Psoas muscle (tissue), 8 donors: ENCODE measurements at regions of chr1 and their contacts with region 1.

Region 1: DNA sequence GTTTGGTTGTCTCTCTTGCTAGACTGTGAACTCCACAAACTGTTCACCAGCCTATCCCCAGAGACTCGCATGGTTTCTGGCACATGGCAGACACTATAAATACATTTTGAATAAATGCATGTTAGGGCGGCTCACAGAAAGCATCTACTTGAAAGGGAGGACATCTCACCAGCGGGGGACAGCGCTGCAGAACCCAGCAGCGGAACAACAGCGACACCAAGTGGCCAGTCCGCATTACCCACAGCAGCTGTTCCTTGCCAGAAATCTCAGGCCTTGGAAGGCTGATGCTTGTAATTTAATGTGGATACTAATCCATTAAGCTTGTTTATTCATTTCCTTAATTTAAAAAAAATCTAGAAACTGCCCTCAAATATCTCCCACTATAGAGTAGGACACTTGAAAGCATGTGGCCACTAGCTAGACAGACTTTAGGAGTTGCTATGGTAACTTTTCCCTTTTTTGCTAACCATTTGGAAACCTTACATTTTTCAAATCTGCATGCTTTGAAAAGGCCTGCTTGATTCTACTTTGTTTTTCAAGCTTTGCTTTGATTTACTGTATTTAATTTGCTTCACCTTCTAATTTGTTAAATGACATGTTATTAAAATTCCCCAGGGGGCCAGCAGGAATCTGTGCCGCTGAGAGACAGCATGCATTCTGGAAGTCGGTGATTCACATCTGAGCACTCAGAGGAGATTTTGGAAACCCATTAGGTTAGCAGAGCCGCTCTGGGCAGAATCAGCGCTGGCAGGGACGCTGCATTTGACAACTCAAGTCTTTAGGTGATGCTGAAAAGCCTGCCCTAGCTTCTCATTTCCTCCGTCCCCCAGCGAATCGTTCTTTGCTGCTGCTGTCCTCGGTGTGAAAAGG is 63.5 kb upstream of the SSX2IP start:
- DNase-seq: peak; percentile 58 to 72
- ATAC-seq: peak; percentile 81 to 95 (median 88)
- H3K4me3 ChIP-seq: no peak overlapping the region
- H3K27ac ChIP-seq: no peak overlapping the region
- H3K4me1 ChIP-seq: no peaks in the 10 kb centered on the region
- H3K27me3 ChIP-seq: peaks cover 0 to 3% (median 0%) of the 10 kb centered on the region in 3 donors
- CTCF ChIP-seq: peak; percentile 96

Region 2: DNA sequence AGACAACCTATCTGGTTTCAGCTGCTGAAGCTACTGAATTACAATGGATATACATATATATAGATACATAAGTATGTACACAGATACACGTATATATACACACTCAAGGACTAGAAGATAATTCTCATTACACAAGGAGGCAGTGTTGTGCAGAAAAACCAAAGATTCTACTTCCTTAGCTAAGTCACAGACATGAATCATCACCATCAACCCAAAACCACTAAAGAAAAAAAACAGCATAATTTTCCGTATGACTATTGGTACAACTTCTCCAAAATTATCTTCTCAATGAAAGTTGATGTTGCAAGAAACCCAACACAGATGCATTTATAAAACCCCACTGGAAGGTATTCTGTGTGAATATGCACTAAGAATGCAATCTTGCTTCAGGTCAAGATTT is 311.5 kb before region 1 on chr1:
- intact Hi-C with region 1: loop called (anchors 5 to 10 kb)
- DNase-seq: no peak
- ATAC-seq: peak in 3 of 4 donors; percentile 55 to 71 (median 61)
- H3K4me3 ChIP-seq: no peak overlapping the region
- H3K27ac ChIP-seq: no peak overlapping the region
- H3K4me1 ChIP-seq: no peaks in the 10 kb centered on the region
- H3K27me3 ChIP-seq: no peaks in the 10 kb centered on the region
- CTCF ChIP-seq: peak; percentile 46

Region 3: GRCh38 chr1:84668185-84668584 is 85.6 kb before region 1 on chr1:
- intact Hi-C with region 1: loop called (anchors 5 to 10 kb)
- DNase-seq: no peak
- ATAC-seq: peak in 2 of 4 donors; percentile 49 to 50
- H3K4me3 ChIP-seq: no peak overlapping the region
- H3K27ac ChIP-seq: no peak overlapping the region
- H3K4me1 ChIP-seq: no peaks in the 10 kb centered on the region
- H3K27me3 ChIP-seq: no peaks in the 10 kb centered on the region
- CTCF ChIP-seq: peak; percentile 25